ENCODE measurements at regions of chr14 and their contacts with region 1.

Region 1: GRCh38 chr14:67704484-67705089 is 2.9 kb downstream of the RDH12 start:
- DNase-seq: peak in 7 of 9 donors; percentile 29 to 63 (median 52)
- ATAC-seq: peak; percentile 93
- H3K4me3 ChIP-seq: no peak overlapping the region
- H3K4me3 Mint-ChIP-seq: no peak overlapping the region
- H3K27ac ChIP-seq: no peak overlapping the region
- H3K27ac Mint-ChIP-seq: peak overlapping the region in 1 of 9 donors; percentile 38
- H3K4me1 ChIP-seq: no peaks in the 10 kb centered on the region
- H3K4me1 Mint-ChIP-seq: peaks cover 0 to 2% (median 0%) of the 10 kb centered on the region in 7 donors
- H3K27me3 ChIP-seq: no peaks in the 10 kb centered on the region
- H3K27me3 Mint-ChIP-seq: peaks cover 0 to 8% (median 0%) of the 10 kb centered on the region in 5 donors

Region 2: DNA sequence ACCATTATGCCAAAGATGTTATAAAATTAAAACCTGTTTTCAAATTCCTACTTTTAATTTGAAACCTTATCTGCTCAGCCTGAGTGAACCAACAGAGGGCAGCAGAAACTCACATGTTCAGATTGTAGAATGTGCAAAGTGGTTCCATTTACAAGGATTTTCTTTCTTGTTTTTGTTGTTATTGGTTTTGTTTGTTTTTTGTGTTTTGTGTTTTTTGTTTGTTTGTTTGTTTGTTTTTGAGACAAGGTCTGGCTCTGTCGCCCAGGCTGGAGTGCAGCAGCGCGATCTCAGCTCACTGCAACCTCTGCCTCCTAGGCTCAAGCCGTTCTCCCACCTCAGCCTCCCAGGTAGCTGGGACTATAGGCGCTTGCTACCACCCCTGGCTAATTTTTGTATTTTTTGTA is 538.1 kb before region 1 on chr14:
- CTCF ChIA-PET with region 1: no interaction called
- POLR2A ChIA-PET with region 1: no interaction called
- intact Hi-C with region 1: loop called in 1 of 2 experiments (anchors 10 kb)
- DNase-seq: peak in 6 of 9 donors; percentile 26 to 39 (median 38)
- ATAC-seq: no peak
- H3K4me3 ChIP-seq: no peak overlapping the region
- H3K4me3 Mint-ChIP-seq: no peak overlapping the region
- H3K27ac ChIP-seq: no peak overlapping the region
- H3K27ac Mint-ChIP-seq: no peak overlapping the region
- H3K4me1 ChIP-seq: no peaks in the 10 kb centered on the region
- H3K4me1 Mint-ChIP-seq: peaks cover 0 to 8% (median 0%) of the 10 kb centered on the region in 7 donors
- H3K27me3 ChIP-seq: no peaks in the 10 kb centered on the region
- H3K27me3 Mint-ChIP-seq: no peaks in the 10 kb centered on the region

Region 3: GRCh38 chr14:67437921-67438320 is 266.7 kb before region 1 on chr14:
- CTCF ChIA-PET with region 1: no interaction called
- POLR2A ChIA-PET with region 1: no interaction called
- intact Hi-C with region 1: no loop called
- DNase-seq: no peak
- ATAC-seq: no peak
- H3K4me3 ChIP-seq: no peak overlapping the region
- H3K4me3 Mint-ChIP-seq: no peak overlapping the region
- H3K27ac ChIP-seq: no peak overlapping the region
- H3K27ac Mint-ChIP-seq: no peak overlapping the region
- H3K4me1 ChIP-seq: no peaks in the 10 kb centered on the region
- H3K4me1 Mint-ChIP-seq: no peaks in the 10 kb centered on the region
- H3K27me3 ChIP-seq: no peaks in the 10 kb centered on the region
- H3K27me3 Mint-ChIP-seq: peaks cover 0 to 42% (median 7%) of the 10 kb centered on the region in 5 donors

Region 4: DNA sequence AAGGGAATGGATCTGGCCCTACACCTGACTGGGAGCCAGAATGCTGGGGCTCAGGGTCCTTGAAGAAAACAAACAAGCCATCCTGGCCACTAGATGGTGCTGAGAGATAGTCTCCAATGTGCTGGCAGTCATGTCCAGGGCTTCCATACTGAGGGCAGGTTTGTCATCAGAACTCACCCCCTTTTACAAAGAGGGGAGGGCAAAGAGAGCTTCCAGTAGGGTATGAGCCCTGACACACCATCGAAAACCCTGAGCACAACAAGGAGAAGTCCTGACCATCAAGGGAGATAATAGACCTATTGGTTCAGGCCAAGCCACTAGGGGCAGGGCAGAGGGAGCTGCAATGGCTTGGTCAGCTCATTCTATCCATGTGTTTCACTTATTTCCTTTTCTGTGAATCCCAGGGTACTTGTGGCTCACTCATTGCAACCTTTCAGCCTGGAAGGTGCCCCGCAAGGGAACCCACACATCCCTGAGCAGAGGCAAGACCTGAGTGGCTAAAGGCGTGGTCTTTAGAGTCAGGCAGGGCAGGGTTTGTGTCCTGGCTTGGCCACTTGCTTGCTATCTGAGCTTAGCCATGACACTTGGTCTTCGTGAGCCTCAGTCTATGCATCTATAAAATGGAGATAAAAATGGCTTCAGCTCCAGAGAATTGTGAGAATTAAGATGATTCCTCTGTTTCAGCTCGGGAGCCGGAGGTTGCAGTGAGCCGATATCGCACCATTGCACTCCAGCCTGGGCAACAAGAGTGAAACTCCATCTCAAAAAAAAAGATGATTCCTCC is 177.7 kb before region 1 on chr14:
- CTCF ChIA-PET with region 1: interaction called, 19 read pairs
- POLR2A ChIA-PET with region 1: no interaction called
- intact Hi-C with region 1: loop called (anchors 1 kb)
- DNase-seq: peak in 5 of 9 donors; percentile 33 to 46 (median 35)
- ATAC-seq: peak; percentile 78
- H3K4me3 ChIP-seq: no peak overlapping the region
- H3K4me3 Mint-ChIP-seq: no peak overlapping the region
- H3K27ac ChIP-seq: no peak overlapping the region
- H3K27ac Mint-ChIP-seq: no peak overlapping the region
- H3K4me1 ChIP-seq: no peaks in the 10 kb centered on the region
- H3K4me1 Mint-ChIP-seq: peaks cover 0 to 6% (median 0%) of the 10 kb centered on the region in 7 donors
- H3K27me3 ChIP-seq: no peaks in the 10 kb centered on the region
- H3K27me3 Mint-ChIP-seq: peaks cover 30 to 75% (median 36%) of the 10 kb centered on the region in 5 donors

Region 5: DNA sequence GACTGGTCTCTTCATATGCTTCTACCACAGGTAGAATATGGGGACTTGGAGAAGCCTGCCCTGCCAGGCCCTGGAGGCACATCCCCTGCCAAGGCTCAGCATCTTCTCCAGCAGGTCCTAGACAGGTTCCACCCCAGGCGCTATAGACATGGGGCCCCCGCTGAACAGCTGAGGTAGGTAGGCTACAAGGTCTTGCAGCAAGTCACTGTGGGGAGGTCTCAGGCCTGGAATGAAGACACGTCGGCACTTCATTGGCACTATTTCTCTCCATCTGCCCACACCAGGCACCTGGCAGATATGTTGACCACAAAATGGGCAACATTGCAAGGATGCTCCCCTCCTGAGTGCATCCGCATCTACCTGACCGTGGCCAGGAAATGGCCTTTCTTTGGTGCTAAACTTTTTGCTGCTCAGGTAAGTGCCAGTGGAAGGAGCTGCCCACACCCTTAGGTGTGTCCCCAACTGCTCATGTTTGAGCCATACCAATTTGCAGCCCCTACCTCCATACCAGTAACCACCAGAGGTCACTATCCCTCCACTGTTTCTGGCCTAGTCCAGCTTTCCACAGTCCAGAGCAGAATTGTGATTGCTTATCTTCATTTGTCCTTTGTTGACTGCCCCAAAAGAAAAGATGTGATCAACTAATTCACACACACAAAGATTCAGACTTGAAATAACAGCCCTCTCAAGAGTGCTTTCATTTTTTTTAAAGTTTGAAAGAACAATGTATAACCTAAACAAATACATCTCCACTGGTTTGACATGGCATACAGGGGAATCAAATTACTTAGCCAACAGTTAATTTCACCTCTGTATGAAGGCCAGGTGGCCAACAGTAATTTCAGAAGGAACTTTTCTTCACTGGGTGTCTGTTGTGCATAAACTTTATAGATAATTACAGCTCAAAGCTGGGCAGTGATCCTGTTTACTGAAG is 120.6 kb before region 1 on chr14:
- CTCF ChIA-PET with region 1: interaction called, 57 read pairs
- POLR2A ChIA-PET with region 1: no interaction called
- intact Hi-C with region 1: loop called (anchors 1 to 2 kb)
- DNase-seq: peak in 5 of 9 donors; percentile 26 to 44 (median 35)
- ATAC-seq: peak; percentile 79
- H3K4me3 ChIP-seq: no peak overlapping the region
- H3K4me3 Mint-ChIP-seq: no peak overlapping the region
- H3K27ac ChIP-seq: no peak overlapping the region
- H3K27ac Mint-ChIP-seq: no peak overlapping the region
- H3K4me1 ChIP-seq: no peaks in the 10 kb centered on the region
- H3K4me1 Mint-ChIP-seq: peaks cover 0 to 11% (median 0%) of the 10 kb centered on the region in 7 donors
- H3K27me3 ChIP-seq: no peaks in the 10 kb centered on the region
- H3K27me3 Mint-ChIP-seq: no peaks in the 10 kb centered on the region

Region 6: GRCh38 chr14:67674481-67675169 is 30.0 kb before region 1 on chr14 and contains the start of gene VTI1B:
- CTCF ChIA-PET with region 1: interaction called, 11 read pairs
- POLR2A ChIA-PET with region 1: interaction called, 5 read pairs
- intact Hi-C with region 1: loop called in 1 of 2 experiments (anchors 2 kb)
- DNase-seq: peak; percentile 71 to 84 (median 80)
- ATAC-seq: peak; percentile 95
- H3K4me3 ChIP-seq: peak within 1 kb of the TSS; percentile 65
- H3K4me3 Mint-ChIP-seq: peak within 1 kb of the TSS; percentile 91 to 96 (median 93)
- H3K27ac ChIP-seq: peak within 1 kb of the TSS; percentile 95
- H3K27ac Mint-ChIP-seq: peak within 1 kb of the TSS; percentile 82 to 96 (median 92)
- H3K4me1 ChIP-seq: peaks cover 17 to 21% of the 10 kb centered on the region in 2 donors
- H3K4me1 Mint-ChIP-seq: peaks cover 22 to 62% (median 55%) of the 10 kb centered on the region in 7 donors
- H3K27me3 ChIP-seq: no peaks in the 10 kb centered on the region
- H3K27me3 Mint-ChIP-seq: no peaks in the 10 kb centered on the region
- total RNA-seq, gene VTI1B: 49.2 to 82.4 (median 65.9) TPM